ENCODE measurements at regions of chr10 and their contacts with region 1.

Region 1: GRCh38 chr10:18214691-18215563 is 74.7 kb downstream of the CACNB2 start:
- DNase-seq: peak; percentile 60
- H3K4me3 ChIP-seq: no peak overlapping the region
- H3K27ac ChIP-seq: peak overlapping the region in 1 of 4 donors; percentile 19
- H3K4me1 ChIP-seq: peaks cover 0 to 11% (median 8%) of the 10 kb centered on the region in 4 donors
- H3K27me3 ChIP-seq: no peaks in the 10 kb centered on the region
- CTCF ChIP-seq: peak; percentile 74 to 85 (median 77)
- EP300 ChIP-seq: no peak
- POLR2A ChIP-seq: no peak

Region 2: DNA sequence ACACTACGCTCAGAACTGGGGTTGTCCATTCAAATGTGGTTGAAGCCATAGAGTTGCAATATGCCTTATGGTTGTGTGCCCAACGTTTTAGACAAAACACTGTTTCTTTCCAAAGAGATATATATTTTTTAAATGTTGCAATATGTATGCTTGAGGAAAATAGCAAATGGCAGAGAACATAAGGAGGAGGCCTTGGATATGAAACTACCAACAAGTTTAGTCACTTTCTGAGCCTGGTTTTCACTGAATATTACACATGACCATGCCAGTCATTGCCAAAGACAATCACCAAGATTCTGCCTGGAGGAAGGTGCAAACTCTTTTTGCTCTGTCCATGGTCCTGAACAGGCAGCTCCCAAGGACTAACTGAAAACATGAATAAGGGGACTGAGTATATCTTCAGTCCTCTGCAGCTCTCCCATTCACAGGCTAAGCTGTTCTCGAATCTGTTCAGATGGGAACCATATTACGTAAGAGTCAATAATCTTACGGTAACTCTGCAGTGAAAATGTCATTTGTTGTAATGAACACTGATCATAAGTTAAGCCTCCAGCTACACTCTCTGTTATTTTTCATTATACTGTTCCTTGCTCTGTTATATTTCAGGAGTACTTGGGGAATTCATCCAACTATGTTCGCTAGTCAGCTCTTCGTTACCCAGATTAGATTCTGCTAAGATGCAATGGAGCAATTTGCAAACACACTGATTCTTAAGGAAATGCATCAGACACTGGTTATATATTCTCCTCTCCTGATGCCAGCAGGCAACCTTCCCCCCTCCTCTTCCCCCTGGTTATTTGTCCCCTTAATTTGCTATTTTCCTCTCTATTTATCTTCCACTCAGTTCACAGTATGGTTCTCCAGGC is 1602.6 kb before region 1 on chr10:
- in situ Hi-C with region 1: no loop called
- intact Hi-C with region 1: loop called (anchors 5 kb)
- DNase-seq: no peak
- H3K4me3 ChIP-seq: no peak overlapping the region
- H3K27ac ChIP-seq: no peak overlapping the region
- H3K4me1 ChIP-seq: no peaks in the 10 kb centered on the region
- H3K27me3 ChIP-seq: no peaks in the 10 kb centered on the region
- CTCF ChIP-seq: no peak
- EP300 ChIP-seq: no peak
- POLR2A ChIP-seq: no peak

Region 3: GRCh38 chr10:17847585-17848296 is 367.2 kb before region 1 on chr10:
- in situ Hi-C with region 1: no loop called
- intact Hi-C with region 1: loop called (anchors 10 kb)
- DNase-seq: no peak
- H3K4me3 ChIP-seq: no peak overlapping the region
- H3K27ac ChIP-seq: no peak overlapping the region
- H3K4me1 ChIP-seq: peaks cover 0 to 3% (median 0%) of the 10 kb centered on the region in 4 donors
- H3K27me3 ChIP-seq: no peaks in the 10 kb centered on the region
- CTCF ChIP-seq: peak; percentile 18 to 38 (median 36)
- EP300 ChIP-seq: no peak
- POLR2A ChIP-seq: no peak

Region 4: DNA sequence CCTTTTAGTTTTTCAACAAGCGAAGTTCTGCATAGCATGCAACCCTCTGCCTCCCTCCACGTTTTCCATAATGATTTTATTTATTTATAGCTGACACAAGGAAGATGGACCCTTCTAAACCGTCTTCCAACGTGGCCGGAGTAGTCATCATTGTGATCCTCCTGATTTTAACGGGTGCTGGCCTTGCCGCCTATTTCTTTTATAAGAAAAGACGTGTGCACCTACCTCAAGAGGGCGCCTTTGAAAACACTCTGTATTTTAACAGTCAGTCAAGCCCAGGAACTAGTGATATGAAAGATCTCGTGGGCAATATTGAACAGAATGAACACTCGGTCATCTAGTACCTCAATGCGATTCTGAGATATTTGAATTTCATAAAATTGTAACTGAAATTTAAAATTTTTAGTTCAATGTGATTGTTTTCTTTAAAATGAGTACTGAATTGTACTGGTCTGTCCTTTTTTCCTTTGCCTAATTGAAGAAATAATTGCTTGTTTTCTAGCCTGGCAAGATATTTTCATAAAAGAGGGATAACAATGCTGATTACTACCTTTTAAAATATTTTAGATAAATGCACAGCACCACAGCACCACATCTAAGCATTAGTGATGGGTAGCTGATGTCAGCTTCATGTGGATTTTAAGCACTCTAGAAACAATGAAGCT is 304.7 kb before region 1 on chr10:
- in situ Hi-C with region 1: loop called in 2 of 4 experiments (anchors 10 kb)
- intact Hi-C with region 1: loop called (anchors 10 kb)
- DNase-seq: peak; percentile 44
- H3K4me3 ChIP-seq: no peak overlapping the region
- H3K27ac ChIP-seq: no peak overlapping the region
- H3K4me1 ChIP-seq: no peaks in the 10 kb centered on the region
- H3K27me3 ChIP-seq: no peaks in the 10 kb centered on the region
- CTCF ChIP-seq: peak; percentile 52 to 70 (median 59)
- EP300 ChIP-seq: no peak
- POLR2A ChIP-seq: no peak

Region 5: DNA sequence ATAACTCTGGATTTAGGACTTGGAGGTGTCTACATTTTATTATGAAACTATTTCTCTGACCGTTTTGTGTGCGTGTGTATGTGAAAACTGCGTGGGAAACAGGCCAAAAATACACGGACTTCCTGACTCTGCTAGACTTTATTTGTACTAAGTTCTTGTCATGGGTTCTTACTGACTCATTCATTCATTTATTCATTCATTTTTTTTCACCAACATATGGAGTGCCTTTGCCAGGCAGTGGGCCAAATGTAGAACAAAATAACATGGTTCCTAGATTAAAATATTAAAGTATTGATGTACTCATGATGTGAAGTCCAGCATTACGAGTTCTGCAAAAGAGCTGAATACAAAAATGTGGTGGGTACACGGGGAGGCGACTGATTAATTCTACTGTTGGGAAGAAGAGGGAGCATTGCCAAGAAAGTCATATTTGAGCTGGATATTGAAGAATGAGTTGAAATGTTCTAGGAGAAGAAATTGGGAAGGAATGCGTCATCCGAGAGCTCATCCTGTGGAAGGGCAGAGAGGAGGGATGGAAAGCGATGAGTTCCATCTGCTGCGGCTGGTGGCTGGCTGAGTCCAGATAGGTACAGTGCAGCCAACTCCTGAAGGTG is 50.1 kb before region 1 on chr10:
- in situ Hi-C with region 1: no loop called
- intact Hi-C with region 1: loop called (anchors 1 kb)
- DNase-seq: no peak
- H3K4me3 ChIP-seq: no peak overlapping the region
- H3K27ac ChIP-seq: peak overlapping the region; percentile 41 to 70 (median 50)
- H3K4me1 ChIP-seq: peaks cover 0 to 8% (median 3%) of the 10 kb centered on the region in 4 donors
- H3K27me3 ChIP-seq: no peaks in the 10 kb centered on the region
- CTCF ChIP-seq: no peak
- EP300 ChIP-seq: no peak
- POLR2A ChIP-seq: no peak

Measured in transverse colon (tissue), 4 donors.